ENCODE measurements at regions of chr22 and their contacts with region 1.

Region 1: GRCh38 chr22:39543095-39543494 is 10.5 kb upstream of the RPS19BP1 start:
- DNase-seq: peak; percentile 36 to 67 (median 54)
- ATAC-seq: peak; percentile 91
- H3K4me3 ChIP-seq: no peak overlapping the region
- H3K27ac ChIP-seq: no peak overlapping the region
- H3K4me1 ChIP-seq: peaks cover 0 to 6% of the 10 kb centered on the region in 2 experiments; a peak in 1 of 5 replicates
- H3K27me3 ChIP-seq: peaks cover 0 to 22% of the 10 kb centered on the region in 2 experiments; a peak in 1 of 5 replicates
- CTCF ChIP-seq: peak; percentile 61 to 71 (median 68)
- EP300 ChIP-seq: no peak
- POLR2A ChIP-seq: no peak
- RAD21 ChIP-seq: peak; percentile 43 to 62

Region 2: DNA sequence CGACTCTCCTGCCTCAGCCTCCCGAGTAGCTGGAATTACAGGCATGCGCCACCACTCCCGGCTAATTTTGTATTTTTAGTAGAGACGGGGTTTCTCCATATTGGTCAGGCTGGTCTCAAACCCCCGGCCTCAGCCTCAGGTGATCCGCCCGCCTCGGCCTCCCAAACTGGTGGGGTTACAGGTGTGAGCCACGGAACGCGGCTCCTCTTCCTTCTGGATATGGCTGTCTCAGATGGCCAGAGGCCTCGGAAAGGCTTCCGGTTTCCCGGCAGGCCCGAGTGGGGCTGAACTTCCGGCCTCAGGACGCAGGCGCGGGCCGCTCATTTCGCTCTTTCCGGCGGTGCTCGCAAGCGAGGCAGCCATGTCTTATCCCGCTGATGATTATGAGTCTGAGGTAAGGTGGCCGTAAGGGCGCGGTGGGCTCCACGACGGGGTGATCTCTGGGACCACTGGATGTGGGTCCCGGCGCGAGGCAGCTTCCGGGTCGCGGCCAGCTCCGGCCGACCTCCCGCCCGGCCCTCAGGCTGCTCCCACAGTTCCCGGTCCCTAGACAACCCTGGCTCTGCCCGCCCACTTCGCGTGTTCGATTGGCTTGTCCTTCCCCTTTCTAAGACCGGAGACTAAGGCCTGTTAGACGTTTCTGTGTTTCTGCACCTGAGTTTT is 1693.9 kb before region 1 on chr22 and contains the start of gene EIF3L:
- CTCF ChIA-PET with region 1: no interaction called
- POLR2A ChIA-PET with region 1: no interaction called
- in situ Hi-C with region 1: no loop called
- intact Hi-C with region 1: no loop called
- DNase-seq: peak; percentile 79 to 93 (median 85)
- ATAC-seq: peak; percentile 89
- H3K4me3 ChIP-seq: peak within 1 kb of the TSS; percentile 79
- H3K27ac ChIP-seq: peak within 1 kb of the TSS; percentile 93
- H3K4me1 ChIP-seq: peaks cover 3 to 8% of the 10 kb centered on the region in 2 experiments; a peak in 3 of 5 replicates
- H3K27me3 ChIP-seq: no peaks in the 10 kb centered on the region
- CTCF ChIP-seq: no peak
- EP300 ChIP-seq: no peak; the same call in 1 of the 2 replicates
- POLR2A ChIP-seq: peak; percentile 98
- RAD21 ChIP-seq: no peak
- polyA plus RNA-seq, gene EIF3L: 368 to 462 TPM

Region 3: DNA sequence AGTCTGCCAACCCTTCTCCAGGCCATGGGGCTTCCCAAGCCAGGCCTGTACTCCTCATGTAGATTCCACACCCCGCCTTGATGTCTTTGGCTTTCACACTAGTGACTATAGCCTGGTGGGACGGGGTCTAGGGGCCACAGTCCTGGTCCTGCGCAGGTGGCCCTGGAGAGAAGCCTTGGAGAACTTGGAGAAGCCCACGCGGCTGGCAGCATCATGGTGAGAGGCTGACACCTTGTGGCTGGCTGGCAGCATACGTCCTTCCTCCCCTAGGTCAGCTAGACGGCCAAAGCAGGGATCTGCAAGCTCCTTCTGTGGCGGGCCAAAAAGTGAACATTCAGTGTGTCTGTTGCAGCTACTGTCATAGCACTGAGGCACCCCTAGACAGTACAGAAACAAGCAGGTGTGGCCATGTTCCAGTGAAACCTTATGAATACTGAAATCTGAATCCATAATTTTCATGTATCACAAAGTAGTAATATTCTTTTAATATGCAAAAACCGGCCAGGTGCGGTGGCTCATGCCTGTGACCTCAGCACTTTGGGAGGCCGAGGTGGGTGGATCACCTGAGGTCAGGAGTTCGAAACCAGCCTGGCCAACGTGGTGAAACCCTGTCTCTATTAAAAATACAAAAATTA is 493.6 kb after region 1 on chr22:
- CTCF ChIA-PET with region 1: interaction called, 4 read pairs
- POLR2A ChIA-PET with region 1: interaction called, 3 read pairs
- in situ Hi-C with region 1: loop called (anchors 5 kb)
- intact Hi-C with region 1: no loop called
- DNase-seq: peak; percentile 63 to 81 (median 69)
- ATAC-seq: peak; percentile 92
- H3K4me3 ChIP-seq: no peak overlapping the region
- H3K27ac ChIP-seq: no peak overlapping the region
- H3K4me1 ChIP-seq: peaks cover 0 to 25% of the 10 kb centered on the region in 2 experiments; a peak in 4 of 5 replicates
- H3K27me3 ChIP-seq: no peaks in the 10 kb centered on the region
- CTCF ChIP-seq: peak; percentile 80 to 86 (median 80)
- EP300 ChIP-seq: no peak
- POLR2A ChIP-seq: no peak
- RAD21 ChIP-seq: peak; percentile 87 to 88

Region 4: DNA sequence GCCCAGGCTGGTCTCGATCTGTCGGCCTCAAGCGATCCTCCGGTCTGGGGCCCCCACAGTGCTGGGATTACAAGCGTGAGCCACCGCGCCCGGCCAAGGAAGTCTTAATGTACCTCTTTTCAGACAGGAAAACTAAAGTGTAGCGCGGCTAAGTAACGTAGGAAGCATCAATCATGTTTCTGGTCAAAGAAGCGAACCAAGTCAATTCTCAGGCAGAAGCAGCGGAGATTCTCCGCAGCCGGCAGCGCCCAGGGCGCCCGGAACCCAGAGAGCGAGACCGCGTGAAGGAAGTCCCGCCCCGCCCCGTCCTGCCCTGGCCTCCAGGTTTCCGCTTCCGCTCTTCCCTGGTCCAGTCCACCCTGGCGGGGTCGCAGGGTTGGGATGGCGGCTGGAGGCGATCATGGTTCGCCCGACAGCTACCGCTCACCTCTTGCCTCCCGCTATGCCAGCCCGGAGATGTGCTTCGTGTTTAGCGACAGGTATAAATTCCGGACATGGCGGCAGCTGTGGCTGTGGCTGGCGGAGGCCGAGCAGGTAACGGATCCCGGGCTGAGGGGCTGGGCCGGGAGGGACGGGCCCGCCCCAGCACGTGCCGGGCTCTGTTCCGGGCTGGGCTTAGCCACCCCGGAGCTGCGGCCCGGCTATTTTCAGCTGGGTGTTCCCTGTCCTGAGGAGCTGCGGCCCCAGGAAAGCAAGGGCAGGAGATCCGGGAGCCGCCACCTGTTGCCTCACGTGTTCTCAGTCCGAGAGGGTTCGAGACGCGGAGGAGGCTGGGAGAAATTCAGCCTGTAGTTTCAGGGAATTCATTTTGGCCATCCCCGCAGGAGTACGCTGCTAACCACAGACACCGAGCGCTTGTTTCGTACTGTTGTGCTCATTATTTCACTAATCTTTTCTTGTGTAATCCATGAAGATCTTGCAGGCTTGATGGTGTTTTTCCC is 803.4 kb after region 1 on chr22 and contains the start of gene ADSL:
- CTCF ChIA-PET with region 1: no interaction called
- POLR2A ChIA-PET with region 1: no interaction called
- in situ Hi-C with region 1: loop called (anchors 5 kb)
- intact Hi-C with region 1: loop called (anchors 10 kb)
- DNase-seq: peak; percentile 84 to 91 (median 86)
- ATAC-seq: peak; percentile 97
- H3K4me3 ChIP-seq: peak within 1 kb of the TSS; percentile 73
- H3K27ac ChIP-seq: peak within 1 kb of the TSS; percentile 76
- H3K4me1 ChIP-seq: peaks cover 5 to 11% of the 10 kb centered on the region in 2 experiments
- H3K27me3 ChIP-seq: no peaks in the 10 kb centered on the region
- CTCF ChIP-seq: peak in 2 of 3 experiments; percentile 2 to 11; a peak in 2 of 6 replicates
- EP300 ChIP-seq: no peak; the same call in 1 of the 2 replicates
- POLR2A ChIP-seq: peak; percentile 96
- RAD21 ChIP-seq: no peak
- polyA plus RNA-seq, gene ADSL: 278 to 322 TPM

Region 5: DNA sequence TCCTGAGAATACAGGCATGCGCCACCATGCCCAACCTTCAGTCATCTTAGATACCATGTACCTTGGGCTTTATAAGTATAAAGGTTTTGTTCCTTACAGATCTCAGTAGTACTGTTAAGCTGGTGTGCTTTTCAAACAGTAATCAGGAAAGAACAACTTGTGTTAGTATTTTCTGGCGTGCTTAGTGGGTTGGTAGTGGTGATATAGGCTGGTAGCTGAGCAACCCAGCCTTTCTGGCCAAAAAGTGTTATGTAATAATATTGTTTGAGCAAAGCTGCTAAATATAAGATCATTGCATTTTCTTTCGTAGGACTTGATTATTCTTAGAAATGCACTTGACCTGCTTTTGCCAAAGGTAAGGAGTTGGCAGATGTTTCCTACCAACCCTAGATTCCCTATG is 809.7 kb after region 1 on chr22:
- CTCF ChIA-PET with region 1: no interaction called
- POLR2A ChIA-PET with region 1: no interaction called
- in situ Hi-C with region 1: loop called (anchors 5 kb)
- intact Hi-C with region 1: loop called (anchors 10 kb)
- DNase-seq: no peak
- ATAC-seq: no peak
- H3K4me3 ChIP-seq: no peak overlapping the region
- H3K27ac ChIP-seq: no peak overlapping the region
- H3K4me1 ChIP-seq: peaks cover 0 to 2% of the 10 kb centered on the region in 2 experiments; a peak in 3 of 5 replicates
- H3K27me3 ChIP-seq: no peaks in the 10 kb centered on the region
- CTCF ChIP-seq: no peak
- EP300 ChIP-seq: no peak
- POLR2A ChIP-seq: no peak
- RAD21 ChIP-seq: no peak